Activated CD4-positive, alpha-beta T cell treated with anti-CD3 and anti-CD28 coated beads for 36 hours (primary cell): ENCODE measurements at regions of chr17 and their contacts with region 1.

Region 1: DNA sequence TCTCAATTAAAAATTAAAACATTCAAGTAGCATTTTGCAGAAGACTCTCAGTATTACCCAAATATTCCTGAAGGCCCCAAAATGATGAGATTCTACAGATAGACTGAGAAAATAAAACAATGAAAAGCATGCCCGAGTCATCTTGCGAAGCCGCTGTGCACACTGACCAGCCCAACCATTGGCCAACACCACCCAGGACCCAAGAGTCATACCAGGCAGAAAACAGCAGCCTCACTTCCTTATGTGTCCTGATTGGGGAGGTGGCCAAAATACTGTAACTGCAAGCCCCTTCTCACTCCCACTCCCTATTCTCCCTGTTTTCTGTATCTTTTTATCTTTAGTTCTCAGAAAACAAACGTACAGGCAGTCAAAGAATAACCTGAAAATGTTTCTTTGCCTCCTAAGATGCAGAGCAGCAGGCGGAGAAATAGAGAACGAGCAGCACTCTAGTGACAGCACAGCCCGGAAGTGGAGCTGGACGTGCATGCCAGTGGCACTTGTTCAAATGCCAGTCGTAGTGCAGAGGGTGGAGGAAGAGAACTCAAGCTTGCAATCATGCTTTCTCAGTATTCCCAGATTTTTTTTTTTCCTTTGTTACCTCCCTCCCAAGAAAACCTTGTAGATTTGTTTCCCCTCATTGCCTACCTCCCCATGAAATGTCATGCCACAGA is 182.3 kb upstream of the SOX9 start:
- DNase-seq: no peak
- ATAC-seq: no peak
- H3K4me3 Mint-ChIP-seq: no peak overlapping the region
- H3K27ac Mint-ChIP-seq: no peak overlapping the region
- H3K4me1 Mint-ChIP-seq: no peaks in the 10 kb centered on the region
- H3K27me3 Mint-ChIP-seq: no peaks in the 10 kb centered on the region

Region 2: DNA sequence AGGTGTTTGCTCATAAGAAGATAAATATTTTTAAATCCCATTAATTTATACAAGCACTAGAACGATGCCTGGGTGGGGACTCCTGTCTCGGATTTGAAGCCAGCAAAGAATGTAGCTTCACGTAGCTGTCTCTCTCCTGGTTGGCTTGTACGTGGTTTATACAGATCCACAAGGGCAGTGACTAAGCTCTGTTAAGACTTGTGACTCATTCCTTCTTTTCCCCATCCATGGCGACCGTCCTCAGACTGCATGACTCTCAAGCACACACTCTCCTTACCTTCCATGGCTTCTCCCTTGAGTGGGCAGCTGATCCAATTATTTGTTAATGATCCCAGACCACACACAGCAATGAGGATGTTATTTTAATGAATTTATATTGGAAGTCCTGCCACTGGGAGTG is 497.4 kb before region 1 on chr17:
- CTCF ChIA-PET with region 1: no interaction called
- POLR2A ChIA-PET with region 1: no interaction called
- intact Hi-C with region 1: no loop called
- DNase-seq: no peak
- ATAC-seq: no peak
- H3K4me3 Mint-ChIP-seq: no peak overlapping the region
- H3K27ac Mint-ChIP-seq: no peak overlapping the region
- H3K4me1 Mint-ChIP-seq: no peaks in the 10 kb centered on the region
- H3K27me3 Mint-ChIP-seq: no peaks in the 10 kb centered on the region

Region 3: DNA sequence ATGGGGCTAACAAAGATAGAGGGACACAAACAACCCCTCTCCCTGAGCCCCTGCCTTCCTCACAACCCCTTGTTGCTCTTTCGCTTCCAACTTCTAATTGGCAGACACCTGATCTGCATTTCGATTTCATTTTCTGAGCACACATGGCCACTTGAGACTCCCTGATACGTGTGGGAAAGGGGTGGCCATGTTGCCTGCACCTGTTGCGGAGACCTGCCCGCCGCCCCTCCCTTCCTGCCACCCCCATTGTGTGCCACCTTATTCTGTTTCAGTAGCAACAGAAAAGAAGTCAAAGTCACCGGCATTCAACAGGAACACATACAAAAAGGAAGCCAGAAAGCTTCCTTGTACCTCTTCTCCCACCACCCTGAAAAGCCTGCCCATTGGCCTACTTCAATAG is 72.4 kb before region 1 on chr17:
- CTCF ChIA-PET with region 1: no interaction called
- POLR2A ChIA-PET with region 1: no interaction called
- intact Hi-C with region 1: no loop called
- DNase-seq: no peak
- ATAC-seq: no peak
- H3K4me3 Mint-ChIP-seq: no peak overlapping the region
- H3K27ac Mint-ChIP-seq: no peak overlapping the region
- H3K4me1 Mint-ChIP-seq: no peaks in the 10 kb centered on the region
- H3K27me3 Mint-ChIP-seq: no peaks in the 10 kb centered on the region

Region 4: GRCh38 chr17:71970312-71970711 is 31.8 kb after region 1 on chr17:
- CTCF ChIA-PET with region 1: no interaction called
- POLR2A ChIA-PET with region 1: no interaction called
- intact Hi-C with region 1: no loop called
- DNase-seq: no peak
- ATAC-seq: peak; percentile 55
- H3K4me3 Mint-ChIP-seq: no peak overlapping the region
- H3K27ac Mint-ChIP-seq: no peak overlapping the region
- H3K4me1 Mint-ChIP-seq: no peaks in the 10 kb centered on the region
- H3K27me3 Mint-ChIP-seq: peaks cover 2% of the 10 kb centered on the region

Region 5: DNA sequence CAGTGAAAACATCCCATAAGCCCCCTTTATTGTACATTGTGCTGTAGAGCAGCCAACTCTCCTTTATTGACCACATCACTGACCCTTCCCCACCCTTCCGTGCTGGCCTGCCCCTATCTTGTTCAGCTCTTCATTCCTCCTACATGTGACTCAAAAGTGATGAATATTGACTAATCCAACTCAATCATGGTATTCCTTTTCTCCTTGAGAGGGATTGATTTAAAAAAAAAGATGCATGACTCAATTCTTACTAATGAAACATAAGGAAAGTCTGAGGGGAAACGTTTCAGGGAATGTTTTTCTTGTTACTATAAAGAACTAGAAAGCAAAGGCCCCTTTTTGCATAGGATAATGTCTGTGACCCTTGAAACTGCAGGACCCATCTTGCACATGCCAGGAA is 57.1 kb after region 1 on chr17:
- CTCF ChIA-PET with region 1: no interaction called
- POLR2A ChIA-PET with region 1: no interaction called
- intact Hi-C with region 1: loop called in 1 of 2 experiments (anchors 10 kb)
- DNase-seq: no peak
- ATAC-seq: no peak
- H3K4me3 Mint-ChIP-seq: no peak overlapping the region
- H3K27ac Mint-ChIP-seq: no peak overlapping the region
- H3K4me1 Mint-ChIP-seq: no peaks in the 10 kb centered on the region
- H3K27me3 Mint-ChIP-seq: no peaks in the 10 kb centered on the region